ENCODE measurements at regions of chr3 and their contacts with region 1.

Region 1: DNA sequence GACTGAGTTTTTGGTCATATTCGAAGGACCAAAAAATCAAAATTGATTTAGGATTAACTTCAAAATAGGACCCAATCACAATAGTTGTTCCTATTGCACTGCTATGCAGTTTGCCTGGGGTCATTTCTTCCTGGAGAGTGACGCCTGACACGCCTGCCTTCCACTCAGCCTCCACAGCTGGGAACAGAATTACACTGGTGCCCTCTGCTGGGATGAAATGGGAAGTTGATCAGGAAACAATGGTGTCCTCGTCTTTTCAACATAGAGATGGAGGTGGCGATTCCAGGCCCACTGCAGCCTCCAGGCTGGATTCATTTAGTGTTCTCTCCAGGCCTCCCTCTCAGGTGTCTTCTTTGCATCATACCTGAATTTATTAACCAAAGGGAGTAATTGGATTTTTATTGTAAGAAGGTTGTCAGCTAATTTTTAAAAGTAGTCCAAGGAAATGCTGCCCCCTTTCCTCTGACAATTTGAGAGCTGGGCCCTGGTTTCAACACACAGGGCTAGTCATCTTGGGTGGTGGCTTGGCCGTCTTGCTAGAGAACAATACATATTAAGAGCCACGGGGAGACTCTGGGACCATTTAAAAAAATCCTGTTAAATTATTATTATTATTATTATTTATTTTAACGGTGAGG is 69.7 kb downstream of the GAP43 start:
- DNase-seq: peak; percentile 74
- H3K4me3 Mint-ChIP-seq: no peak overlapping the region
- H3K27ac Mint-ChIP-seq: no peak overlapping the region
- H3K4me1 Mint-ChIP-seq: no peaks in the 10 kb centered on the region
- H3K27me3 Mint-ChIP-seq: peaks cover 4% of the 10 kb centered on the region

Region 2: DNA sequence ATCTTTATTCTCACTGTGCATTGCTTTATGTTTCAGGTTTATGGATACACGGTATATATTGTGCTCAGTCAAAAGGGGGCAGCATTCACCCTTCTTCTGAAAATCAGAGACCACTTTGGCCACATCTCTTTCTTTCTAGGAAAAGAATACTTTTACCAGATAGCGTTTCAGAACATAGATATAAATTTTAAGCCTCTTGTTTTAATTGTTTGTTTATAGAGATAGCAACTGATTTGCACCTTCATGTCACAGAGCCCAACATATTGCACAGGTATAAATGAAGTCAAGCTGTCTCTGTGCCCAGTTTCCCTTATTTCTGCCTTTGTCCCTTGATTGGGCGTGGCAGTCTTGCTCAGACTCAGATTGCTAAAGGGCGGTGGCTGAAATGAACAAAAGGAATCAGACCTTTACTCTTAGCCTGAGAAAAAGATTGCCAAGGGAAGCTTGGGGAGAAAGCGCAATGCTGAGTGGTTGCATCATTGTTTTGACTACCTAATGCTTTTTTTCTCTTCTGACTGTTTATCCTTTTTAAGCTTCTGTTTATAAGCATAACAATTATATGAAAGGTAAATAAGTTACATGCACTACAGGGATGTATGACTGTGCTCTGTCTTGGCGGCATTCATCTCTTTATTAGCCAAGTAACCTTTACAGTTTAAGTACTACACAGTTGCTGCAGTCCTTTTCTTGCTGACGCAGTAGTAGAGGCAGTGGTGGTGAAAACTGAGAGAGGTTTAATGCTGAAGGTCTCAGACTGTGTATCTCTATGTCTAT is 475.1 kb before region 1 on chr3:
- CTCF ChIA-PET with region 1: interaction called, 14 read pairs
- DNase-seq: no peak
- H3K4me3 Mint-ChIP-seq: no peak overlapping the region
- H3K27ac Mint-ChIP-seq: no peak overlapping the region
- H3K4me1 Mint-ChIP-seq: no peaks in the 10 kb centered on the region
- H3K27me3 Mint-ChIP-seq: no peaks in the 10 kb centered on the region

Measured in activated naive CD4-positive, alpha-beta T cell treated with anti-CD3 and anti-CD28 coated beads, Interleukin-2, amount 10 ng/mL, durations not matched to agents 7 days and 5 days (primary cell).